Ascending aorta (tissue), 2 donors: ENCODE measurements at regions of chr14 and their contacts with region 1.

Region 1: GRCh38 chr14:39174560-39175444 is at the start of gene PNN:
- DNase-seq: peak; percentile 92 to 99
- H3K4me3 ChIP-seq: peak within 1 kb of the TSS; percentile 72 to 92
- H3K27ac ChIP-seq: peak within 1 kb of the TSS; percentile 94 to 95
- H3K4me1 ChIP-seq: peaks cover 5 to 16% of the 10 kb centered on the region in 2 donors
- H3K27me3 ChIP-seq: no peaks in the 10 kb centered on the region
- CTCF ChIP-seq: no peak
- total RNA-seq, gene PNN: 19.3 TPM

Region 2: DNA sequence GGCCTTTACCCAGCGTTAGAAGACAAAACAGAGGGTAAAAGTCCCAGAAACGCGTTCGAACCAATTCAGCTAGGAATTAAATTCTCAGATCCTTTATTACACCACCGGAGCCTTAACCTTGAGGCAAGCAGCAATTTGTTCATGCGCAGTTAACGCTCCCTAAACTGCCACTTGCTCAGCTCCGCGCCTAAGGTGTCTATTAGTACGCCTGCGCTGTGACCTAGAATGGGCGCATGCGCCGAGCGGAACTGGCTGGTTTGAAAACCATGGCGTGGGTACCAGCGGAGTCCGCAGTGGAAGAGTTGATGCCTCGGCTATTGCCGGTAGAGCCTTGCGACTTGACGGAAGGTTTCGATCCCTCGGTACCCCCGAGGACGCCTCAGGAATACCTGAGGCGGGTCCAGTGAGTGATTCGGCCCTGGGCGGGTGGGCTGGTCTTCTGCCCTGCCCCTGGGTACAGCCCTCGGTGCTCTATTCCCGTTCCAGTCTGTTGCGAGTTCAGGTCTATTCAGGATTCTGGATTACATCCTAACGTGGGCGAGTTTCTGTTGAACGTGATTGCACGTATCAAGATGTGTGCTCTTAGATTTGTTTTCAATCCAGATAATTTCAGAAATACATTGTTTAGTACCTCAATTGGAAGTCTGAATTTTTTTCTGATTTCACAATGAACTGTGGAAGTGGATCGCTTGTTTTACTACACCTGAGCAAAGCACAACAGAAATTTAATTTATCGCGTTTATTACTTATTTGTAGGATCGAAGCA is 60.5 kb before region 1 on chr14 and contains the start of gene GEMIN2:
- intact Hi-C with region 1: loop called (anchors 2 kb)
- DNase-seq: peak; percentile 77 to 97
- H3K4me3 ChIP-seq: peak within 1 kb of the TSS; percentile 75 to 80
- H3K27ac ChIP-seq: peak within 1 kb of the TSS; percentile 24 to 66
- H3K4me1 ChIP-seq: peaks cover 0 to 5% of the 10 kb centered on the region in 2 donors
- H3K27me3 ChIP-seq: no peaks in the 10 kb centered on the region
- CTCF ChIP-seq: no peak
- total RNA-seq, gene GEMIN2: 23.8 TPM

Region 3: GRCh38 chr14:39266871-39267591 is 92.2 kb after region 1 on chr14:
- intact Hi-C with region 1: loop called (anchors 1 kb)
- DNase-seq: peak; percentile 27 to 86
- H3K4me3 ChIP-seq: peak overlapping the region; percentile 93 to 94
- H3K27ac ChIP-seq: peak overlapping the region; percentile 99 to 100
- H3K4me1 ChIP-seq: peaks cover 0 to 21% of the 10 kb centered on the region in 2 donors
- H3K27me3 ChIP-seq: no peaks in the 10 kb centered on the region
- CTCF ChIP-seq: no peak

Region 4: GRCh38 chr14:39351708-39352107 is 176.9 kb after region 1 on chr14:
- intact Hi-C with region 1: no loop called
- DNase-seq: no peak
- H3K4me3 ChIP-seq: no peak overlapping the region
- H3K27ac ChIP-seq: no peak overlapping the region
- H3K4me1 ChIP-seq: no peaks in the 10 kb centered on the region
- H3K27me3 ChIP-seq: no peaks in the 10 kb centered on the region
- CTCF ChIP-seq: no peak

Region 5: DNA sequence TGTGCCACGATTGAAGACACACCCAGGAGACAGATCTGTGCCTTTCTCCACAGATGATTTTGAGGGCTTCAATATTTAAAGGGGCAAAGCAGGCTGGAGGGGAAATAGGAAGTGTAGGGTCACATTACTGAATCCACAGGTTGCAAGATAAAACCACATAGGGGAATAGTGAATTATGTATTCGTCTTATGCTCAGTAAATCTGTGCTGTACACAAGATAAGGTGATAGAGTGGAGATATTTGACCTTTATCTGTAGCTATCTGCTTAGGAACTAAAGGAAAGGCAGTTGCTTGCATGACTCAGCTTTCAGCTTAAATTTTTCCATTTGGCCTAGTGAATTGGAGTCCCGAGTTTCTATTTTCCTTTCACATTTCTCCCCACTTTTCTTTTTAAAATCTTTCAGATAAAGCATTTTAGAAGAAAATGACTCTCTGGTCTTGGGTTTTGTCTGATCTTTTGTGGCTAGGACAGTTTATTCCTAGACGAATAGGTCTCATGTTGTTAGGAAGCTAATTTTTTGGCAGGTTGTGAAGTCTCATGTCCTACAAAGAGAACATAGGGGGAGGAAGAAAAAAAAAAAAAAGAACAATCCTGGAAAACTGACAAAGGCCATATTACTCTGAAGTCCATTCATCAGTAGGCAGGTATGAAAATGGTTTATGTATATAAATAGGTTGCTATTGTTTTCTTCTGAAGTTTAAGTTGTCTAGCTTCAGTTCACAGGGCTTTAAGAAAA is 202.0 kb after region 1 on chr14:
- intact Hi-C with region 1: loop called (anchors 2 kb)
- DNase-seq: no peak
- H3K4me3 ChIP-seq: peak overlapping the region in 1 of 2 donors; percentile 8
- H3K27ac ChIP-seq: peak overlapping the region; percentile 75 to 82
- H3K4me1 ChIP-seq: peaks cover 0 to 19% of the 10 kb centered on the region in 2 donors
- H3K27me3 ChIP-seq: no peaks in the 10 kb centered on the region
- CTCF ChIP-seq: no peak

Region 6: DNA sequence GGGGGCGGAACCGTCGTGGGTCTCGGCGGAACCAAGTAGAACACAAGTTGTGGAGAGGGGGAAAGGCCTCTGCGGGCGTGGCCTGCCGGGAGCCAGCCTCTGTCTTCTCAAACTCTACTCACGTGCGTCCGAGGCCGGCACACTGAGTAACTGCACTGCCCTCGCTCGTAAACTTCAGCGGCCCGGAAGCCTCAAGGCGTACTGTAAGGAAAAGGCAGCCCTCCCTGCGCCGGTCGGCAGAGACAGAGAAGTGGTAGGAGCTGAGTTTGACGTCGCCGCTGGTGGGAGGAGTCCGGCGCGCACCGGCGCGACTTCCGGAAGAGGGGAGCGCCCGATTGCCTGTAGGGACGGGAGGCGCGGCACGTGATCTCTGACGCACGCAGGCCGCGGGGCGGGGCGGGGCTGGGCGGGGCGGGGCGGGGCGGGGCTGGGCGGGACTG is 257.4 kb after region 1 on chr14 and contains the start of gene FBXO33:
- intact Hi-C with region 1: loop called (anchors 1 kb)
- DNase-seq: peak; percentile 84 to 98
- H3K4me3 ChIP-seq: peak within 1 kb of the TSS; percentile 95 to 98
- H3K27ac ChIP-seq: peak within 1 kb of the TSS; percentile 93 to 95
- H3K4me1 ChIP-seq: peaks cover 0 to 12% of the 10 kb centered on the region in 2 donors
- H3K27me3 ChIP-seq: no peaks in the 10 kb centered on the region
- CTCF ChIP-seq: no peak
- total RNA-seq, gene FBXO33: 14.5 TPM